Posterior vena cava (tissue), 2 donors: ENCODE measurements at regions of chr12 and their contacts with region 1.

Region 1: GRCh38 chr12:115235880-115236279 is 551.9 kb upstream of the TBX3 start:
- DNase-seq: no peak

Region 2: DNA sequence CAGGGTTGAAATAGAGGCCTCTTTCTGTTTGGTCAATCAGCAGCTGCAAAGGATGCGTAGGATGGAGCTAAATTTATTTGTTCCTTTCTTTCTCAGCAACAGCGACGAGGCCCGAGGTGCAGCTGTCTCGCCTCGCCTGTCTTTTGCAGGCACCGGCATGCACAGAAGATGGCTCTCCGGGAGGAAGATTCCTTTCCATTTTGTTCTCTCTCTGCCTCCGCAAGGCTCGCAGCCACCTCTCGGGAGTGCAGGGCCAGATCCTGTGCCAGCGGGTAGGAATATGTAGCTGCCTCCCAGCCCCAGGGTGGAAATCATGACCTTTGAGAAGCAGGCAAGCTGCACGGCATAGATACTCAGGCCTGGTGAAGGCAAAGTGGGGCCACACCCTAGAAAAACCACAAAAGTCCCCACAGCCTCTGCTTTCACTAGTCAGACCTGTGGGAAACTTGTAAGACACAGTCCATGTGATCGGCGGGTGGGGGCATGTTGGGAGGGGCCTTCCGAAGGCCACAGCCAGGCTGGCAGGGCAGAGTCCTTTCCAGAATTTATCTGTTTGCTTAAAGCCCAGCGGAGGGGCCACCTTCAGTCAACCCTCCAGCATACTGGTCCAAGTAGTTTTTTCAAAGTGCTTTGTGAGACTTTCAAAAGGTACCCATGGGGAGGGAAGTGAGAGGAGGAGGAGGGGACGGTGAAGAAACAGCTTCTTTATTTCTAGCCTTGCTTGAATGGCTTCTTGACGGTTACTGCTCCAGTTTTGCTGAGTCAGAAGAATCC is 1323.5 kb after region 1 on chr12 and contains the start of gene MAP1LC3B2:
- intact Hi-C with region 1: loop called in 1 of 2 experiments (anchors 5 kb)
- DNase-seq: no peak
- total RNA-seq, gene MAP1LC3B2: 1.8 TPM in 1 of 2 donors, not detected in the other